PC-3 (cell line): ENCODE measurements at regions of chr18 and their contacts with region 1.

Region 1: DNA sequence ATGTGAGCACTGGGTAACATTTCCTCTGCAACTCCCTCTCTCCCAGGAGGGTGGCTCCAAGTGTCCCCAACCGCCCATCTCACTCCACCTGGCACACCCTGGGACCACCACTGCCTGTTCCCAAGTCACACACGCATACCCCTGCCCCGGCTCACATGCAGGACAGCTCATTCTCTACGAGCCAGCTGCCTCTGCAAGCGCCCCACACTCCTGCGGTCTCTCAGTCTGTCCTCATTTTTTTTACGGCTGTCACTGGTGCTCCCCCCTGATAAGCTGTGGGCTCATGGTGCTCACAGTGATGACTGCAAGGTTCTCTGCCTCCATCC is 30.8 kb downstream of the AFG3L2 start:
- DNase-seq: no peak
- ATAC-seq: no peak; the same call in 1 of the 2 replicates
- H3K4me3 ChIP-seq: no peak overlapping the region
- H3K27ac ChIP-seq: peak overlapping the region; percentile 25
- H3K4me1 ChIP-seq: peaks cover 16% of the 10 kb centered on the region
- H3K27me3 ChIP-seq: no peaks in the 10 kb centered on the region
- CTCF ChIP-seq: no peak

Region 2: DNA sequence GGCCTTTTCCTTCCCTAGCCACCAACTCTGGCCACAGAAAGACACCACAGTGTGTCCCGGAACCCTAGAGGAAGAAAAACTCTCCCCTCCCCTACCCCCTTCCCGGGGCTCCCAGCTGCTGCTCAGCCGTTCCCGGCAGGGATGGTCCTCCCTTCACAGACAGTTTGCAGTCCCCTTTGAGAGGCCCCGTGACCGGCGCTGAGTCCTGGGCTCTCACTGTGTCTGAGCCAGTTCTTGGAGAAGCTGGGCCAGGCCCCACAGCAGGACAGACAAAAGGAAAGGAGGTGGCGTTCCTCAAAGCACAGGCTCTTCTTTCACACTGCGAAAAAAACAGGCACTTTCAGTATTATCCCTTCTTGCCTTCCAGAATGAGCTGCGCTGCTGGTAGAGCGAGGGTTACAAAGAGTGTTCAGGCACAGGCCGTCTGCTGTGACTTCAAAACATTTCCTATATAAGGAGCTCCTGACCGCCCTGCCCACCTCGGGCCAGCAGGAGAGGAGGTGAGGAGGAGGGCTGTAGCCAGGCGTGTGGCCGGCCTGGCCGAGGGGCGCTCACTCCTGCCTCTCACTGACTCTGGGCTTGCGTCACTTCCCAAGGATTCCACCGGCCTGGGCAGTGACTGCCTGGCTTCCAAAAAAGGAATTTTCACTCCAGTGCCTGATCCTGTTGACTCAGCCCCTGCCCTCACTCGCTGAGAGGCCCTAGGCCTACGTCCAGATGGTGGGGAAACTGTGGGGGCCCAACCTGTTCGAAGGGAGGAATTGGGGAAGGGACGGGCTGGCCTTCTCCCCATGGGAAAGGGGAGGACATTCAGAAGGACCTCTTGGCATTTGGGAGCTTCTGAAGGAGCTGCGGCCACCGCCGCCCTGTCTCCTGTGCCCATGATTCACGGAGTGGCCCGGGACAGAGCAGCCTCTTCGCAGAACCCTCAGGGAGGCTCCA is 67.2 kb before region 1 on chr18:
- CTCF ChIA-PET with region 1: interaction called, 10 read pairs
- POLR2A ChIA-PET with region 1: no interaction called
- intact Hi-C with region 1: no loop called
- DNase-seq: no peak
- ATAC-seq: no peak
- H3K4me3 ChIP-seq: no peak overlapping the region
- H3K27ac ChIP-seq: no peak overlapping the region
- H3K4me1 ChIP-seq: peaks cover 24% of the 10 kb centered on the region
- H3K27me3 ChIP-seq: no peaks in the 10 kb centered on the region
- CTCF ChIP-seq: no peak

Region 3: DNA sequence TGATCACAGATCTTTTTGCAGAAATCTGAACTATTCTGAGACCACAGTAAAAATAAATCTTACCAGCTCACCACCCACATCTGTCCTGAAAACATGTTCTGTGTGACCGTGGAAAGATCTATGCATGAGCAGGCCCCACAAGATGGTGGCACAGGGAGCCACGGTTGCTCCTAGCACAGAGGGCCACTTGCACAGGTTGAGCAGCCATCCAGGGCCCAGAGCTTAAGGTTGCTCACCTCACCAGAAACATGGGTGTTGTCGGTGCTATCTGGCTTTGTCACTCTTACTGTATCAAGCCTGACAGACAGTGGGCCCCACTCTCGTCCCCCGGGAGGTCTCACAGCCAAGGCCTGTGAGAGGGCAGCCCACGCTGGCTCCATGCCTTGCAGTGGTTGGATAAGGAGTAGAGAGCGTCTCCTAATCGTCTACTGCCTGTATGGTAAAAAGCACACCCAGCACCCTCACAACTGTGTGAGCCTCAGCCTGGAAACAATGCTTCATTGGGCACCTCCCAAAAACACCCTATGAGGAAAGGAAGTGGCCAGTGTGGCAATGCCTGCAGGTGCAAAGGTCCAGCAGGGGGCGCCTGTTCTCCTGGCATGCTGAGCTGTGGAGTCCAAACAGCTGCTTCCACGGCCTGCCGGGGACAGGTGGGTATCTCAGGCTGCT is 18.6 kb before region 1 on chr18:
- CTCF ChIA-PET with region 1: interaction called, 10 read pairs
- POLR2A ChIA-PET with region 1: no interaction called
- intact Hi-C with region 1: no loop called
- DNase-seq: peak; percentile 86
- ATAC-seq: peak; percentile 98
- H3K4me3 ChIP-seq: no peak overlapping the region
- H3K27ac ChIP-seq: no peak overlapping the region
- H3K4me1 ChIP-seq: no peaks in the 10 kb centered on the region
- H3K27me3 ChIP-seq: no peaks in the 10 kb centered on the region
- CTCF ChIP-seq: peak; percentile 98